HAP-1 (cell line): ENCODE measurements at regions of chr14 and their contacts with region 1.

Region 1: GRCh38 chr14:74249433-74250375 is 10.5 kb downstream of the VSX2 start:
- DNase-seq: no peak
- H3K4me3 ChIP-seq: no peak overlapping the region
- H3K4me1 ChIP-seq: 0 out of 2 replicates have a peak, but pooled peaks cover 3% of the 10 kb centered on the region
- H3K27me3 ChIP-seq: no peaks in the 10 kb centered on the region

Region 2: DNA sequence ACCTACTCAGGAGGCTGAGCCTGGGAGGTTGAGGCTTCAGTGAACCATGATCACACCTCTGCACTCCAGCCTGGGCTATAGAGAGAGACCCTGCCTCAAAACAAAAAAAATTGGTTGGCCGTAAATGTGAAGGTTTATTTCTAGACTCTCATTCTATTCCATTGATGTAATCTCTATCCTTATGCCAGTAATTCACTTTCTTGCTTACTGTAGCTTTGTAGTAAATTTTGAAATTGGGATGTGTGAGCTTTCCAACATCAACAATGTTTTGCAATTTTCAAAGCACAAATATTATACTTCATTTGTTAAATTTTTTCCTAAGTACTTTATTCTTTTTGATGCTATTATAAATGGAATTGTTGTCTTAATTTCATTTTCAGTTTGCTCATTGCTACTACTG is 140.3 kb before region 1 on chr14:
- in situ Hi-C with region 1: loop called (anchors 5 kb)
- DNase-seq: no peak
- H3K4me3 ChIP-seq: no peak overlapping the region
- H3K4me1 ChIP-seq: peaks cover 17% of the 10 kb centered on the region
- H3K27me3 ChIP-seq: no peaks in the 10 kb centered on the region